ENCODE measurements at regions of chr9 and their contacts with region 1.

Region 1: DNA sequence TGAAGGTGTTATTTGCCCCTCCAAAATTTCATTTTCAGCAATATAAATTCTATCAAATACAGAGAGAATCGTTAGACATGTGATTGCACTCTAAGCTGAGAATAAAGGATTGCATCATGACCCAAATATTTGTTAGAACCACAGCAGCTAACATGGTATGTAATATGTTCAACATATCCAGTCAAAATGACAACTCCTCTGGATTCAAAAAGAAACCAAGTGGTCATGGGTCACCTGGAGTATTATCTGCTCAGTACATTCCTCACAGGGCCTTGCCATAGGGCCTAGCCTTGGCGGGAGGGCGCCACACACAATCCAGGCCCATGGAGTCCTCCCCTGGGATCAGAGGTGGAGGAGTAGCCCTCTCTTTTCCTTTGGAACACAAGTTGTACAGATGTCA is 179.2 kb downstream of the HSD17B3 start:
- DNase-seq: no peak
- ATAC-seq: no peak
- H3K4me3 ChIP-seq: no peak overlapping the region
- H3K27ac ChIP-seq: no peak overlapping the region
- H3K4me1 ChIP-seq: no peaks in the 10 kb centered on the region
- H3K27me3 ChIP-seq: no peaks in the 10 kb centered on the region
- CTCF ChIP-seq: no peak
- POLR2A ChIP-seq: no peak

Region 2: DNA sequence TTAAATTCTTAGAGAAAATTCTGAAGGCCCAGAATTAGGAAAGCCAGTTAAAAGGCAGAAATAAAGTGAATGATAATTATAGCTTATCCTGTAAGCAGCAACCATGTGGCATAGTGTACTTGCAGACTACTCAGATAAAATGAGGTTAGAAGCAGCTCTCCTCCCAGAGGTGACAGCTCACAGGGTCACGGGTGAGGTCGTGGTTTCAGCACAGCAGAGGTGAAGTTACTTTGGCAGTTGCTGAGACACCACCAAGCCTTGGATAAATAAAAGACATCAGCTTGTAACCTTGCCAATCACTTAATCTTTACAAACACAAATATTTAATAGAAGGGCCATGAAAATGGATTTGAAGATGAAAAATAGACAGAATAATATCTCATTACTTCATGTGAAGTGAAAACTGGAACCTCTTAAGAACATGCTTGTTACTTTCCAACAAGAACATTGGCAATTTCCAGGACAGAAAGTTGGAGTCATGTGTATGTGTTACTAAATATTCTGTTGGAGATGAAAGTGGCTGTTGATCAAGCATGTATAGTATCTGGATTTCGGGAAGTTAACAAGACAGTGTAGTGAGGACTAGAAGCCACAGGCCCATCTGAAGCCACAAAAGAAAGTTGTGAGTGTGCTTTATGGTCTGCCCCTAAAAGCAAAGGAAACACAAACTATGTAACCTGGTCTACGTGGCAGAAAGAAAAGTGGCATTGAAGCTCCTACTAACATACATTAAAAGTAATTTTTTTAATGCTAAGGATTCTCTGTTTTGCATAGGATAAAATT is 112.9 kb before region 1 on chr9:
- in situ Hi-C with region 1: no loop called
- intact Hi-C with region 1: loop called (anchors 10 kb)
- DNase-seq: no peak
- ATAC-seq: no peak
- H3K4me3 ChIP-seq: no peak overlapping the region
- H3K27ac ChIP-seq: peak overlapping the region in 1 of 4 donors; percentile 48
- H3K4me1 ChIP-seq: peaks cover 12 to 13% of the 10 kb centered on the region in 2 donors
- H3K27me3 ChIP-seq: no peaks in the 10 kb centered on the region
- CTCF ChIP-seq: no peak
- POLR2A ChIP-seq: no peak

Region 3: DNA sequence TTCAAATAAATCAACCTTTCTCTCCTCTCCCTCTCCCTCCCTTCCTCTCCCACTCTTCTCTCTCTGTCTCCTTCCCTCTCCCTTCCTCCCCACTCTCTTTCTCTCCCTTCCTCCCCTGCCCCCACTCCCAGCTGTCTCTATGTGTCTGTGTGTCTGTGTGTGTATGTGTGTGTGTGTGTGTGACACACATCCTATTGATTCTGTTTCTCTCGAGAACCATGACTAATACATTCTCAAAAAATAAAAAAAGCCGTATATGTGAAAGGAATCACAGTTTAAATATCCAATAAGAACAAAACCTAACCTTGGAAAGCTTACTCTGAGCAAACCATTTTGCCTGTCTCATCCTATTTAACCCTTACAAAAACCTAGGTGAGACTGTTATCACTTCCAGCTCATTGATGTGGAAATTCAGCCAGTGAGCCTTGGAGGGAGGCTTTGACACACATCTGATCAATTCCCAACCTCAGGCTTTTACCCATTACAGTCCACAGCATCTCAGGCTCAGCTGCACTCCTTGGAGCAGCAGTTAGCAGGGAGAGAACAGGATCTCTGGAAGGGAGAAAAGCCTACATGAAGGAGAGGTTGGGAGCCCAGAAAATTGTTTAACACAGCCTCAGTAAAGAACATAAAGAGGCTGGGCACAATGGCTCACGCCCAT is 170.9 kb after region 1 on chr9:
- in situ Hi-C with region 1: no loop called
- intact Hi-C with region 1: no loop called
- DNase-seq: no peak
- ATAC-seq: no peak
- H3K4me3 ChIP-seq: no peak overlapping the region
- H3K27ac ChIP-seq: no peak overlapping the region
- H3K4me1 ChIP-seq: no peaks in the 10 kb centered on the region
- H3K27me3 ChIP-seq: no peaks in the 10 kb centered on the region
- CTCF ChIP-seq: no peak
- POLR2A ChIP-seq: no peak